Calu3 (cell line): ENCODE measurements at regions of chr11 and their contacts with region 1.

Region 1: GRCh38 chr11:74570266-74571061 is 21.9 kb upstream of the POLD3 start:
- DNase-seq: peak; percentile 70
- H3K4me3 Mint-ChIP-seq: no peak overlapping the region
- H3K27ac Mint-ChIP-seq: no peak overlapping the region
- H3K4me1 Mint-ChIP-seq: peaks cover 24% of the 10 kb centered on the region
- H3K27me3 Mint-ChIP-seq: no peaks in the 10 kb centered on the region
- CTCF ChIP-seq: peak; percentile 69

Region 2: GRCh38 chr11:73961321-73961720 is 609.1 kb before region 1 on chr11:
- CTCF ChIA-PET with region 1: no interaction called
- intact Hi-C with region 1: no loop called
- DNase-seq: no peak
- H3K4me3 Mint-ChIP-seq: no peak overlapping the region
- H3K27ac Mint-ChIP-seq: no peak overlapping the region
- H3K4me1 Mint-ChIP-seq: peaks cover 13% of the 10 kb centered on the region
- H3K27me3 Mint-ChIP-seq: no peaks in the 10 kb centered on the region
- CTCF ChIP-seq: no peak

Region 3: DNA sequence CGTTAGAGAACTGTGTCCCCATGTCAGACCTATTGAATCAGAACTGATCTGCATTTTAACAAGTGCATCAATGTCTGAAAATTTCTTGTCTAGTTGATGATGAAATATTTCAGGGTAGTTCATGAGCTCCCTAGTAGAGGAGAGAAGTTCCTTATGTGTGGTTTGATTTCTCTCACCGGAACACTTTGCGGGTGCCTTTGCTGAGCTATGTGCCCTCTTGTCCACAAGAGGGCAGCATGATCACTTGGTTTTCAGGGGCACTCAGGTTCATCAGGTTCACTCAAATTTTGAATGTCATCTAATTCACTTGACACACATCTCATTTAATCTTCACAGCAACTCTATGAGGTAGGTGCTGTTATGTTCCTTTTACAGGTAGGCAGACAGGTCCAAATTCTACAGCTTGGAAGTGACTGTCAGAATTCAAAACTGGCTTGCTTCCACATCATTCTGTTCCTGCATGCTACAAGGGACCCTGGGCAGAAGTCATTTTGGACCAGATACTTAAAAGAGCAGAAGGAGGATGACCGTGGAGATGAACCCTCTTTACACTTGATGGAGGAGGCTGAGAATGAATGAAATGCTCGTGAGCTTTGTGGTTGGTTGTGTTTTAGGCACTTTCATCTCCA is 314.6 kb before region 1 on chr11:
- CTCF ChIA-PET with region 1: no interaction called
- intact Hi-C with region 1: loop called (anchors 10 kb)
- DNase-seq: peak; percentile 37
- H3K4me3 Mint-ChIP-seq: no peak overlapping the region
- H3K27ac Mint-ChIP-seq: no peak overlapping the region
- H3K4me1 Mint-ChIP-seq: no peaks in the 10 kb centered on the region
- H3K27me3 Mint-ChIP-seq: peaks cover 6% of the 10 kb centered on the region
- CTCF ChIP-seq: peak; percentile 76

Region 4: GRCh38 chr11:74388678-74389327 is 181.7 kb before region 1 on chr11:
- CTCF ChIA-PET with region 1: no interaction called
- intact Hi-C with region 1: loop called (anchors 1 kb)
- DNase-seq: peak; percentile 70
- H3K4me3 Mint-ChIP-seq: no peak overlapping the region
- H3K27ac Mint-ChIP-seq: no peak overlapping the region
- H3K4me1 Mint-ChIP-seq: peaks cover 13% of the 10 kb centered on the region
- H3K27me3 Mint-ChIP-seq: no peaks in the 10 kb centered on the region
- CTCF ChIP-seq: peak; percentile 59

Region 5: DNA sequence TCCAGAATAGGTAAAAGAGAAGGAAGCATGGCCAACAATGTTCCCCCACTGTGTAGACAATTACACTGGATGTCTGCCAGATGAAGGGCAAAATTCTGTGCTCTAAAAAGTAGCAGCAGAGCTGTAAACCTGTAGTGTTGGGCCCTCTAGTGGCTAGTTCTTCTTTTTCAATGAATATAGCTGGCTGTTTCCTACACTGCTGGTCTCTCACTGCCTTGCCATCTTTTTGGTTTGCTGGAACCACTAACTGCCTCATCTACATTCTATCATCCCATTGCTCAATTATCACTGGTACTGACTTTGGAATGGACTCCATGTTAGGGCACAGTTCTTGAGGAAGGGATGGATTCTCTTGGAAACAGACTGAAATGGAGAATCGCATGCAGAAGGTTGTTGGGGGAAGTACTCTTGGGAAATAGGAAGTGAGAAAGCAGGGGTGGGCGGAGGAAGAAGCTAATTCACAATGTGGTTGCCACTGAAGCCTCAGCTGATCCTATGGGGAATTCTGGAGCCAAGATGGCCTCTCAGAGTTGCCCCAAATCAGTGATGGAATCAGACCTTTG is 121.0 kb before region 1 on chr11:
- CTCF ChIA-PET with region 1: interaction called, 64 read pairs
- intact Hi-C with region 1: loop called (anchors 1 kb)
- DNase-seq: peak; percentile 60
- H3K4me3 Mint-ChIP-seq: no peak overlapping the region
- H3K27ac Mint-ChIP-seq: no peak overlapping the region
- H3K4me1 Mint-ChIP-seq: peaks cover 9% of the 10 kb centered on the region
- H3K27me3 Mint-ChIP-seq: no peaks in the 10 kb centered on the region
- CTCF ChIP-seq: peak; percentile 62

Region 6: DNA sequence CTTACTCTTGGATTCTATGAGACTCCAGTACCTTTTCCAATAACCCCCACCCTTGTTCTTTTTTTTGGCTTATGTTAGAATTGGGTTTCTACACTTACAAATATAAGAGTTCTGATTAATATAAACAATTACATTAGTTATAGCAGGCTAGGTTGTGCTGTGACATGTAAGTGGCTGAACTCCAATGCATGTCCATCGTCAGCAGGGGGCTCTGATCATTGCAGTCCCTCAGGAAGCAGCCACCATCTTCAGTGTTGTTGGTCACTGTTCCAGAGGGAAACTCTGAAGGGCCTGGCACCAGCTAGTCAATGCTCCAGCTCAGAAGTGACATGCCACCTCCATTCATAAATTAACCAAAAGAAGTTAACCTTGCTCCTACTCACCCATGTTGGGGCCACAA is 82.6 kb before region 1 on chr11:
- CTCF ChIA-PET with region 1: interaction called, 20 read pairs
- intact Hi-C with region 1: loop called (anchors 1 kb)
- DNase-seq: peak; percentile 63
- H3K4me3 Mint-ChIP-seq: no peak overlapping the region
- H3K27ac Mint-ChIP-seq: no peak overlapping the region
- H3K4me1 Mint-ChIP-seq: peaks cover 23% of the 10 kb centered on the region
- H3K27me3 Mint-ChIP-seq: no peaks in the 10 kb centered on the region
- CTCF ChIP-seq: peak; percentile 51

Region 7: DNA sequence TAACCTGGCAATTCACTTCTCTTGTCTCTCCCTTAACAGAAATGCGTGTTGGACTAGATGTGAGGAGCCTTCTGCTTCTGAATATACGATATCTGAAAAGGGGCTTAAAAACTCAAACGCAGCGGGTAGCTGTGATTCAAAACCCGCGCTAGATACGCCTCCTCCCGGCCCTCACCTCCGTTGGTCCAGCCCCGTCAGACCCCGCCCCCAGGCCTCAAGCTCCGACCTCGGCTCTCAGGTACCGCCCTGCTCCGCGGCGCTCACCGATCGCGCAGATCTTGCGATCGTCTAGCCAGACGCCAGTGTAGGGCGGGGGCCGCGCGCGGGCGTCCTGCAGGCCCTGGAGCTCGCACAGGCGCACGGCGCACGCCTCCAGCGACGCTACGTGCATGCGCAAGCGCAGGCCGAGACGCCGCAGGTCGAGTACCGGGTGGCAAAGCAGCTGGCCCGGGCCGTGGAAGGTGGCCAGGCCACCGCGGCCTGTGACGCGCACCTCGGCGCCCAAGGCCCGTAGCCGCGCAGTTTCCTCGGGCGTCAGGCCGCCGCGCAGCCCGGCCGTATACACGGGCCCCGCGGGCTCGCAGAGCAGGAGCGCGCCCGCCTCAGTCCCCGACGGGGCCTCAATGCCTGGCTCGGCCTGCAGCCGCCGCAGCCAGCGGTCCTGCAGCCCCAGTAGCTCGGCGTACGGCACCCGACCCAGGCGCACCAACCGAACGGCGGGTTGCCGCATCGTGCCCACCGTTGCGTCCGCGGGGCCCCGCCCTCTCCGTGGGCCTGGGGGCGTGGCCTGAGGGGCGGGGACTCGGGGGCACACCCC is 77.3 kb before region 1 on chr11 and contains the start of gene LIPT2:
- CTCF ChIA-PET with region 1: interaction called, 20 read pairs
- intact Hi-C with region 1: loop called (anchors 1 kb)
- DNase-seq: peak; percentile 98
- H3K4me3 Mint-ChIP-seq: peak within 1 kb of the TSS; percentile 67
- H3K27ac Mint-ChIP-seq: peak within 1 kb of the TSS; percentile 90
- H3K4me1 Mint-ChIP-seq: peaks cover 30% of the 10 kb centered on the region
- H3K27me3 Mint-ChIP-seq: no peaks in the 10 kb centered on the region
- CTCF ChIP-seq: no peak
- total RNA-seq, gene LIPT2: 7.8 and 10.9 TPM in 2 replicates